Activated CD4-positive, alpha-beta T cell treated with anti-CD3 and anti-CD28 coated beads, Interleukin-2, amount 10 ng/mL, durations not matched to agents 24 days and 14 days (primary cell): ENCODE measurements at regions of chr17 and their contacts with region 1.

Region 1: GRCh38 chr17:56319517-56319916 is 166.2 kb downstream of the ANKFN1 start:
- DNase-seq: no peak
- H3K4me3 Mint-ChIP-seq: no peak overlapping the region
- H3K27ac Mint-ChIP-seq: no peak overlapping the region
- H3K4me1 Mint-ChIP-seq: no peaks in the 10 kb centered on the region
- H3K27me3 Mint-ChIP-seq: peaks cover 14% of the 10 kb centered on the region

Region 2: GRCh38 chr17:56125830-56126819 is 193.4 kb before region 1 on chr17:
- intact Hi-C with region 1: loop called (anchors 5 kb)
- DNase-seq: peak; percentile 57
- H3K4me3 Mint-ChIP-seq: no peak overlapping the region
- H3K27ac Mint-ChIP-seq: no peak overlapping the region
- H3K4me1 Mint-ChIP-seq: no peaks in the 10 kb centered on the region
- H3K27me3 Mint-ChIP-seq: peaks cover 7% of the 10 kb centered on the region